IMR-90 (cell line): ENCODE measurements at regions of chr1 and their contacts with region 1.

Region 1: DNA sequence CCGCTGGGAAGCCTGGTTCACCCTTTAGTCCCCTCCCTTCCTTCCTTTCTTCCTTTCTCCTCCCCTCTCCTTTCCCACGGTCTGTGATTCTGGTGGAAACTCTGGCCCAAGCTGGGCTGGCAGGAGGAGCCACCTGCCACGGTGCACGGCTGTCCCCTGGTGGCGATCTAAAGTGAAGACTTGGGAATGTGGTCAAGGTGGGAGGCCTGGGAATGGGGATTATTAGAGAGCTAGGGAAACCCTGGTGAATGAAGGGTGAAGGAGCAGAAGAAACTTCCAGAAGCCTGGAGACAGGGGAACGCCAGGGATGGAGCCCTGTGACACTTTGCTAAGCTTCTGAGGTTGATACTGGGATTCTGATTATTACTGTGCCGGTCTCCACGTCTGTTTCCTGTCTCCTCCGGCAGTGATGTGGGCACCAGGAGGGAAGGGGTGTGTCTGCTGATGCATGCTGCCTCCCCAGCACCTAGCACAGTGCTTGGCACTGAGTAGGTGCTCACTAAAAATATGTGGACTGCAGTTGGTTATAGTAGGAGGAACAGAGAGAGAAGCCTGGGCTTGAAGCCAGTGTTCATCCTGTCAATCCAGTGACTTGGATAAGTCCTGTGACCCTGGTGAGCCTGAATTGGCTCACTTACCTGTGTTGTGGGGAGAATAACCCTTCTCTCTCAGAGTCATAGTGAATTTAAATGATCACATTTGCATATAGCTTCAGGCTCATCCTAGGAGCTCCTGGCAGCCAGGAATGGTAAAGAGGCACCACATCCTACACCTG is 71.2 kb upstream of the NBPF3 start:
- DNase-seq: peak; percentile 84
- ATAC-seq: peak; percentile 96
- H3K4me3 ChIP-seq: no peak overlapping the region
- H3K27ac ChIP-seq: no peak overlapping the region
- H3K4me1 ChIP-seq: no peaks in the 10 kb centered on the region
- H3K27me3 ChIP-seq: no peaks in the 10 kb centered on the region
- CTCF ChIP-seq: peak; percentile 99
- POLR2A ChIP-seq: peak; percentile 78
- RAD21 ChIP-seq: peak; percentile 100

Region 2: GRCh38 chr1:21232044-21232443 is 136.7 kb before region 1 on chr1:
- CTCF ChIA-PET with region 1: interaction called, 21 read pairs
- POLR2A ChIA-PET with region 1: no interaction called
- dilution Hi-C with region 1: no loop called
- in situ Hi-C with region 1: loop called (anchors 5 kb)
- intact Hi-C with region 1: loop called (anchors 1 kb)
- DNase-seq: peak; percentile 66
- ATAC-seq: peak; percentile 86
- H3K4me3 ChIP-seq: no peak overlapping the region
- H3K27ac ChIP-seq: no peak overlapping the region
- H3K4me1 ChIP-seq: peaks cover 3% of the 10 kb centered on the region; the same call in 1 of the 2 replicates
- H3K27me3 ChIP-seq: no peaks in the 10 kb centered on the region
- CTCF ChIP-seq: peak; percentile 74
- POLR2A ChIP-seq: no peak
- RAD21 ChIP-seq: peak; percentile 88

Region 3: GRCh38 chr1:21468599-21468998 is 99.9 kb after region 1 on chr1:
- CTCF ChIA-PET with region 1: no interaction called
- POLR2A ChIA-PET with region 1: no interaction called
- dilution Hi-C with region 1: no loop called
- in situ Hi-C with region 1: no loop called
- intact Hi-C with region 1: loop called (anchors 1 kb)
- DNase-seq: peak; percentile 37
- ATAC-seq: no peak
- H3K4me3 ChIP-seq: no peak overlapping the region
- H3K27ac ChIP-seq: no peak overlapping the region
- H3K4me1 ChIP-seq: 0 out of 2 replicates have a peak, but pooled peaks cover 3% of the 10 kb centered on the region
- H3K27me3 ChIP-seq: no peaks in the 10 kb centered on the region
- CTCF ChIP-seq: peak; percentile 51
- POLR2A ChIP-seq: no peak
- RAD21 ChIP-seq: peak; percentile 36; the same call in 1 of the 2 replicates

Region 4: DNA sequence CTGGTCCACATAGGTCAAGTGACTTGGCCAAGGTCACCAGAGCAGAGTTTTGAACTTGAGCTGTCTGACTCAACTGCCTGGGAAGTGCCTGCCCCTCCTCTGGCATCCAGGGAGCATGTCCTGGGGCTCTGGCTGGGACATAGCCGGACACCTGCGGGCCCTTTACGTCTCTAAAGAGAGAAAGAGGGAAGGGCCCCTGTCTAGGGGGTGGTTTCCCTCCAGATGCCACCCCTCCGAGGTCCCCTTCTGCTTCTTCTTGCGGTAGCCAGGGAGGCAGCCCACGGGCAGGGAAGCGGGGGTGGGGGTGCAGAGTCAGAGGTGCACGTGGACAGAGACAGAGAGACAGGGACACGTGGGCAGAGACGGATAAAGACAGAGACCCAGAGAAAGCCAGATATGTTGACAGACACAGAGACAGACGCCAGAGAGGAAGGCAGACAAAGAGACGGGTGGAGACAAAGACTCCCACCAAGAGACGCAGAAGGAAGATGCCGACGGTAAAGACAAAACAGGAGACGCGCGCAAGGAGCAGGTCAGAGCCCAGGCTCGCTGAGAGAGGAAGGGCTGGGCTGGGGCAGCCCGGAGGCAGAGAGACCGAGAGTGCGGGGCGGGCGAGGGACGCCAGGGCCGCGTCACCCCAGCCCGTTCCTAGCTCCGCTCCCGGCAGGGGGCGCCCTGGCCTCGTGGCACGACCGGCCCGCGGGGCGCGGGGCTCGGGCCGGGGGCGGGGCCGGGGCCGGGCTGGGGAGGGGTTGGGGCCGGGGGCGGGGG is 140.1 kb after region 1 on chr1:
- CTCF ChIA-PET with region 1: interaction called, 5 read pairs
- POLR2A ChIA-PET with region 1: no interaction called
- dilution Hi-C with region 1: no loop called
- in situ Hi-C with region 1: no loop called
- intact Hi-C with region 1: loop called (anchors 5 kb)
- DNase-seq: peak; percentile 31
- ATAC-seq: peak; percentile 83
- H3K4me3 ChIP-seq: 0 out of 2 replicates have a peak overlapping the region, but pooled peaks have one; percentile 4
- H3K27ac ChIP-seq: no peak overlapping the region
- H3K4me1 ChIP-seq: peaks cover 12% of the 10 kb centered on the region
- H3K27me3 ChIP-seq: peaks cover 16% of the 10 kb centered on the region
- CTCF ChIP-seq: peak; percentile 68
- POLR2A ChIP-seq: no peak
- RAD21 ChIP-seq: peak; percentile 65

Region 5: DNA sequence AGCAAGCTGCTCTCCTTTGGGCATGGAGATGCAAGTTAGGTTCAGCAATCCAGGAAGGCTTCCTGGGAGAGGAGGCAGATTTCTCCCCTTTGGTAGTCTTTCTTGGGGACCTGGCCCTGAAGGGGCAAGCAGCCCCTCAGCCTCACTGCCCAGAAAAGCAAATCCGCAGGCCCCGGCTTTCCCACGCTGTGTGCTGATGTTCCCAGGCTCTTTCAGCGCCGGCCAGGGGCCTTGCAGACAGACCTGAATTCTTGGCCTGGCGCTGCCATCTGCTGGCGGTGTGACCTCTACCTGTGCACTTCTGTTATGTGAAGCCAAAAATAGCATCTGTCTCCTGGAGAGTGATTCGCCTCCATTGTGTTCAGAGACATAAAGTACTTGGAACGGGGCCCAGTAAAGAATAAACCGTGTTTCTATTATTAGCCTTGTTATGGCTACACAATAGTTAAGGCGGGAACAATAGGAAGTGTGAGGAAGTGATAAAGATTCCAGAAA is 205.3 kb after region 1 on chr1:
- CTCF ChIA-PET with region 1: interaction called, 7 read pairs
- POLR2A ChIA-PET with region 1: no interaction called
- dilution Hi-C with region 1: no loop called
- in situ Hi-C with region 1: loop called (anchors 5 kb)
- intact Hi-C with region 1: loop called (anchors 1 kb)
- DNase-seq: peak; percentile 75
- ATAC-seq: peak; percentile 89
- H3K4me3 ChIP-seq: no peak overlapping the region
- H3K27ac ChIP-seq: no peak overlapping the region
- H3K4me1 ChIP-seq: no peaks in the 10 kb centered on the region
- H3K27me3 ChIP-seq: no peaks in the 10 kb centered on the region; the same call in 1 of the 2 replicates
- CTCF ChIP-seq: peak; percentile 76
- POLR2A ChIP-seq: no peak
- RAD21 ChIP-seq: peak; percentile 83